K562 (cell line): ENCODE measurements at regions of chr4 and their contacts with region 1.

Region 1: DNA sequence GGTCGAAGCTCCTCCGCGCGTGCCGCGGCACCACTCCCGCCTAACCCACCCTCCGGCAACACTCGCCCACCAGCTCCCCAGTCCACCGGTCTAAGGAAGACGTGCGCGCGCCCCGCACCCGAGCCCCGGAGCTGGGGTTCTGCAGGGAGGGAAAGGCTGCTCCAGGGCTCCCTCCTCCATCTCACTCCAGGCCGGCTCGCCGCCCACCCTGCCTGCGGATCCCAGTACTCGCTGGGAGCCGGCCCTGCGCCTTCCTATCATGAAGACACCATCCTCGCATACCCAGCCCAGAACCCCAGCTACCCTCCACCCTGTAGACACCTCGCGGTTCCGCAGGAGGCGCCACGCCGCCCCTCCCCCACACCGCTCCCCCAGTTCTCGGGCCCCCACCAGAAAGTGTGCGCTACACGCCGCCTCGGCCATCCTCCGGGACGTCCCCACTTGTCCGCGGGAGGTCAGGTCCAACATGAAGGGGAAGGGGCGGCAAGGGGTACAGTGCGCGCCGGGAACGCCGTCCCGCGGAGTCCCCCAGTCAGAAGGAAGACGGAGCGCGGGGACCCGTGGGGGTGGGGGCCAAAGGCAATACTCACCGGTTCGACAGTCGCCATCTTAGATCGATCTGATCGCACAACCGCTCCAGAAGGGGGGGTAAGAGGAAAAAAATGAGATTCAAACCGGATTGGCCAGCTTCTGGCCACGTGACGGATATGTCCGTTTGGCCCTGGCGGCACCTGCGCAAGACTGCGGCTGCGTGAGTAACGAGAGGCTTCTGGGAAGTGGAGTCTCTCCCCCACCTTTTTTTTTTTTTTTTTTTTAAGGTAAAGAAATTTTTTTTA is at the start of gene EIF4E:
- DNase-seq: peak; percentile 94 to 99 (median 96)
- ATAC-seq: peak; percentile 84
- H3K4me3 ChIP-seq: peak within 1 kb of the TSS; percentile 97
- H3K27ac ChIP-seq: peak within 1 kb of the TSS; percentile 96
- H3K4me1 ChIP-seq: peaks cover 11 to 15% of the 10 kb centered on the region in 2 experiments
- H3K27me3 ChIP-seq: no peaks in the 10 kb centered on the region
- CTCF ChIP-seq: peak; percentile 17 to 38 (median 28); a peak in 5 of 6 replicates
- EP300 ChIP-seq: 0 out of 2 replicates have a peak, but pooled peaks have one; percentile 21
- POLR2A ChIP-seq: peak; percentile 92
- RAD21 ChIP-seq: no peak
- polyA plus RNA-seq, gene EIF4E: 349 to 489 TPM

Region 2: DNA sequence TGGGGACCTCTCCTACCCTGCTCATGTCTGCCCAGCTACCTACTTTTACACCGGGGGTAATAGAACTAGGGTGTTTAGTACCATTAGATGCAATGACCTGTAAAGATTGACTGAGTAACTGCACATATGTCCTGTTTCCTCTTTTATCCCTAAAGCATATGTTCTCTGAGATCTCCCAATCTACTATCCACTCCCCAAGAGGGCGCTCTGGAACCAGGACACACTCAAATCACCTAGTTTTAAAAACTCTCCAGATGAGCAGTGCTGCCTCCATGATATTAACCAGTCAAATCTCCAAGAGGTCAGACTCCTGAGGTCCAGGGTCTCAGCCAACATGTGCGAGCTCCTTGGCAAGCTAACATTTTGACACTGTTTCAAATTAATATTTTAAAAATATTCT is 183.4 kb before region 1 on chr4:
- CTCF ChIA-PET with region 1: no interaction called
- POLR2A ChIA-PET with region 1: interaction called, 5 read pairs
- in situ Hi-C with region 1: no loop called
- intact Hi-C with region 1: loop called (anchors 5 kb)
- DNase-seq: peak in 2 of 4 experiments; percentile 29 to 78
- ATAC-seq: peak; percentile 87
- H3K4me3 ChIP-seq: no peak overlapping the region
- H3K27ac ChIP-seq: no peak overlapping the region
- H3K4me1 ChIP-seq: no peaks in the 10 kb centered on the region; a peak in 1 of 5 replicates
- H3K27me3 ChIP-seq: no peaks in the 10 kb centered on the region
- CTCF ChIP-seq: peak; percentile 69 to 84 (median 72)
- EP300 ChIP-seq: no peak
- POLR2A ChIP-seq: no peak
- RAD21 ChIP-seq: peak; percentile 64 to 80

Region 3: GRCh38 chr4:98786866-98787265 is 141.9 kb before region 1 on chr4:
- CTCF ChIA-PET with region 1: no interaction called
- POLR2A ChIA-PET with region 1: no interaction called
- in situ Hi-C with region 1: no loop called
- intact Hi-C with region 1: loop called (anchors 10 kb)
- DNase-seq: peak in 2 of 4 experiments; percentile 33 to 54
- ATAC-seq: peak; percentile 91
- H3K4me3 ChIP-seq: no peak overlapping the region
- H3K27ac ChIP-seq: no peak overlapping the region
- H3K4me1 ChIP-seq: 0 out of 5 replicates have a peak, but pooled peaks cover 0 to 4% of the 10 kb centered on the region in 2 experiments
- H3K27me3 ChIP-seq: peaks cover 0 to 5% of the 10 kb centered on the region in 2 experiments; a peak in 1 of 5 replicates
- CTCF ChIP-seq: peak; percentile 38 to 62 (median 53); a peak in 5 of 6 replicates
- EP300 ChIP-seq: no peak
- POLR2A ChIP-seq: no peak
- RAD21 ChIP-seq: peak; percentile 28 to 66; a peak in 3 of 4 replicates

Region 4: DNA sequence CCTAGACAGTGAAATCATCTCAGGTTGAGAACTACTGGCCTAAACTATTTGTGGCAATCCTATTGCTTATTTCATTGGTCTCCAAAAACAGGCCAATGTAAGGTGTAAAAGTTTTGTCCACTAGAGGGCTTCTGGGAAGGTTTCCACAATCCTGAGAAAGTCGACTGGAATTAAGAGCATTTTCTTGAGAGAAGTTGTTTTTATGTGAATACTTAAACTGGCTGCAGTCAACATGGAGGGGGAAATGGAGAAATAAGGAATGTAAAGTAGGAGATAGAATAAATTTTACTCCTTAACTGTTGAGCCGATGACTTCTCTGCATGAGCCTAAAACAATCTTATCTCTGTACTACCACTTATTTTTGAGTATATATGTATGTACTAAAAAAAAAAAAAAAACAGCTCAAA is 11.2 kb after region 1 on chr4:
- CTCF ChIA-PET with region 1: no interaction called
- POLR2A ChIA-PET with region 1: interaction called, 12 read pairs
- in situ Hi-C with region 1: no loop called
- intact Hi-C with region 1: no loop called
- DNase-seq: peak; percentile 34 to 73 (median 45)
- ATAC-seq: peak; percentile 88
- H3K4me3 ChIP-seq: no peak overlapping the region
- H3K27ac ChIP-seq: no peak overlapping the region
- H3K4me1 ChIP-seq: no peaks in the 10 kb centered on the region
- H3K27me3 ChIP-seq: no peaks in the 10 kb centered on the region
- CTCF ChIP-seq: peak; percentile 63 to 82 (median 80); a peak in 5 of 6 replicates
- EP300 ChIP-seq: no peak
- POLR2A ChIP-seq: no peak
- RAD21 ChIP-seq: peak; percentile 48 to 62

Region 5: GRCh38 chr4:99054428-99054994 is 125.8 kb after region 1 on chr4:
- CTCF ChIA-PET with region 1: no interaction called
- POLR2A ChIA-PET with region 1: interaction called, 3 read pairs
- in situ Hi-C with region 1: no loop called
- intact Hi-C with region 1: loop called (anchors 5 kb)
- DNase-seq: no peak
- ATAC-seq: no peak
- H3K4me3 ChIP-seq: no peak overlapping the region
- H3K27ac ChIP-seq: no peak overlapping the region
- H3K4me1 ChIP-seq: no peaks in the 10 kb centered on the region; a peak in 2 of 5 replicates
- H3K27me3 ChIP-seq: no peaks in the 10 kb centered on the region
- CTCF ChIP-seq: no peak
- EP300 ChIP-seq: no peak
- POLR2A ChIP-seq: no peak
- RAD21 ChIP-seq: no peak

Region 6: GRCh38 chr4:99462875-99463464 is 534.2 kb after region 1 on chr4:
- CTCF ChIA-PET with region 1: no interaction called
- POLR2A ChIA-PET with region 1: no interaction called
- in situ Hi-C with region 1: no loop called
- intact Hi-C with region 1: loop called (anchors 10 kb)
- DNase-seq: peak; percentile 66 to 72 (median 68)
- ATAC-seq: peak; percentile 97
- H3K4me3 ChIP-seq: no peak overlapping the region
- H3K27ac ChIP-seq: no peak overlapping the region
- H3K4me1 ChIP-seq: no peaks in the 10 kb centered on the region
- H3K27me3 ChIP-seq: no peaks in the 10 kb centered on the region
- CTCF ChIP-seq: peak; percentile 74 to 84 (median 79)
- EP300 ChIP-seq: no peak
- POLR2A ChIP-seq: no peak
- RAD21 ChIP-seq: peak; percentile 83 to 84